ENCODE measurements at regions of chr1 and their contacts with region 1.

Region 1: DNA sequence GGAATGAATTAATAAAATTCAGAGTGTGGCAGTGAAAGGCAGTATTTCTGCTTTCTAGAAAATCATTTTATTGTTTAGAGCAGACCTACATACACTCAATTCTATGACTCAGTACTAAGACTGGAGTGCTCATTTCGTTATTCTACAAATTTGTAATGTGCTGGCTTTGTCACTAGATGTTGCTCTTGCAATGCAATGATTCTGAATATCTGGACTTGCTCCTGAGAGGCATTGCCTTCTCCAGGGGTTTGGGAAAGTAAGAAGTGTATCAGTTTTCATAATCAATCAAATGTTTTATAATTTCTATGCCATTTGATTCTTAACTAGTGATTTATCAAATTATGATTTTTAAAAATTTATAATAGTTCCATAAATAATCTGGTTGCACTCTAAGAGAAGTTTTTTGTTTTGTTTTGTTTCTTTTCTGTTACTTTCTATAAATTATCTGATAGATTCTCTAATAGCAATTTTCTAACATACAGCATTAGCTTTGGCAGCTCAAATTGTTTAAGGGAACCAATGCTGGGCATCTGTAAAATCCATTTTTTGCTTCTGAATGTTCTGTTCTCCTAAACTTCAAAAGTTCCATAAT is 280.5 kb upstream of the SGIP1 start:
- DNase-seq: peak; percentile 39
- H3K4me3 Mint-ChIP-seq: no peak overlapping the region
- H3K27ac Mint-ChIP-seq: no peak overlapping the region
- H3K4me1 Mint-ChIP-seq: peaks cover 11% of the 10 kb centered on the region
- H3K27me3 Mint-ChIP-seq: no peaks in the 10 kb centered on the region
- CTCF ChIP-seq: peak; percentile 67

Region 2: GRCh38 chr1:66446261-66447001 is 193.0 kb after region 1 on chr1:
- CTCF ChIA-PET with region 1: interaction called, 18 read pairs
- intact Hi-C with region 1: loop called (anchors 1 kb)
- DNase-seq: peak; percentile 40
- H3K4me3 Mint-ChIP-seq: no peak overlapping the region
- H3K27ac Mint-ChIP-seq: no peak overlapping the region
- H3K4me1 Mint-ChIP-seq: no peaks in the 10 kb centered on the region
- H3K27me3 Mint-ChIP-seq: no peaks in the 10 kb centered on the region
- CTCF ChIP-seq: peak; percentile 86

Region 3: DNA sequence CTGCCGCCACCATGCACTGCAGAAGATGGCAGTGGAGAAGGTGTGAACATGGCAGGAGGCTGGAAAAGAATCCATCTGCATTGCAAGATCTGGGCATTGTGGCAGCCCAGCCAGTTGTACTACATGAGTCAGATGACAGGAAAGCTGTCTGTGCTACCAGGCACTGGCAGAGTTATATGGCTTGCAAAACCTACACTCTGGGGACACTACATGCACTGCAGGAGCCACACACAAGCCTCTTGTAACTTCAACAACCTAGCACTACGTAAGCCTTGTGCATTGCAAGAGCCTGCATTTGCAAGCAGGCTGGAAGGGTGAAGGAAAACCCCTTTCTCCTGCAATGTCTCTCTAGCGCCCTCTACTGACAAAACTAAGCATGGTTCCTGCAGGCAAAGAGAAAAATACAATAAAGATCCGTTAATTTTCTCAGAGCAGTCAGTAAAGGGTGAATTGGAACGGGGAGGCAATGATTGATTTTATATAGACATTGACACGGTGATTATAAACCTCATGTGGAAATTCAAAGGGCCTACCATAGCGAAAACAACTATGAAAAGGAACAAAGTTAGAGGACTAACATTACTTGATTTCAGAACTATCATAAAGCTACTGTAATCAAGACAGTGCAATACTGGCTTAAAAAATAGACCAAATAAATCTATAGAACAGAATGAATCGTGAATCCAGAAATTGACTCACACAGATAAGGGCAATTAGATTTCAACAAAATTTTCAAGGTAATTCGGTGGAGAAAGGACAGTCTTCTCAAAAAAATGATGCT is 472.6 kb after region 1 on chr1:
- CTCF ChIA-PET with region 1: no interaction called
- intact Hi-C with region 1: loop called (anchors 2 kb)
- DNase-seq: peak; percentile 66
- H3K4me3 Mint-ChIP-seq: no peak overlapping the region
- H3K27ac Mint-ChIP-seq: no peak overlapping the region
- H3K4me1 Mint-ChIP-seq: no peaks in the 10 kb centered on the region
- H3K27me3 Mint-ChIP-seq: no peaks in the 10 kb centered on the region
- CTCF ChIP-seq: peak; percentile 88